Calu3 (cell line): ENCODE measurements at regions of chr2 and their contacts with region 1.

Region 1: GRCh38 chr2:23824777-23825212 is 102.1 kb downstream of the ATAD2B start:
- DNase-seq: peak; percentile 54
- H3K4me3 Mint-ChIP-seq: no peak overlapping the region
- H3K27ac Mint-ChIP-seq: no peak overlapping the region
- H3K4me1 Mint-ChIP-seq: no peaks in the 10 kb centered on the region
- H3K27me3 Mint-ChIP-seq: no peaks in the 10 kb centered on the region
- CTCF ChIP-seq: peak; percentile 30

Region 2: DNA sequence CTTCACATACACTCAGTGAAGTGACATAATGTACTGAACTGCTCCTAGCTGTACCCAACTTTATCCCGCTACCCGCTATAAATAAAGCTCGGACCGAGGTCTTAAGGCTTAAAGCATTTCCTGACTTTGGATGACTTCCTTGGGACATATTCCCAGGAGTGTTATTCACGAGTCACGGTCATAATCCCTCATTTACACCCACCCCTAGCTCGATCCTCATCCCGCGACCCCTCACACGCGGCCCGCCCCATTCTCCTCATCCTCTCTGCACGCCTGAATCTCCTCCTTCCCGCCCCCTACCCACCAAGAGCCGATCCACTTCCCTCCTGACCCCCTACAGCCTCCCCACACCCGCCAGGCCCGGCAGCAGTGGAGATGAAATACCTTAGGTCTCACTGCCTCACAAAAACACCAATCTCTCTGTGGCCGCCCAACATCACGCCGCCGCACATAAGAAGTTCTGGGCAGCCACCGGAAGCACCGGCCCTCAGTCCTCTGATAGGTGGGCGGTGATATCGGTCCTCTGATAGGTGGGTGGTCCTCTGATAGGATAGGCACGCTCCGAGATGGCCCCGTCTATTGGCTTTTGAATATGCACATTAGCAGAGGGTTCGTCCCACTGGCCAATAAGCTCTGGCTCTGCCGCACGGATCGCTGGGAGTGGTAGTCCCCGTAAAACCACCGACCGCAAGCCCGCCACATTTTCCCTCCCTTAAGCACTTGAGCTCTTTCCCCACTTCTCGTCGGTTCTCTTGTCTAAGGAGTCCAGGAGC is 222.3 kb after region 1 on chr2 and contains the start of gene WDCP:
- CTCF ChIA-PET with region 1: interaction called, 13 read pairs
- intact Hi-C with region 1: no loop called
- DNase-seq: peak; percentile 94
- H3K4me3 Mint-ChIP-seq: peak within 1 kb of the TSS; percentile 88
- H3K27ac Mint-ChIP-seq: peak within 1 kb of the TSS; percentile 50
- H3K4me1 Mint-ChIP-seq: peaks cover 9% of the 10 kb centered on the region
- H3K27me3 Mint-ChIP-seq: no peaks in the 10 kb centered on the region
- CTCF ChIP-seq: no peak
- total RNA-seq, gene WDCP: 13.4 and 17.2 TPM in 2 replicates

Region 3: DNA sequence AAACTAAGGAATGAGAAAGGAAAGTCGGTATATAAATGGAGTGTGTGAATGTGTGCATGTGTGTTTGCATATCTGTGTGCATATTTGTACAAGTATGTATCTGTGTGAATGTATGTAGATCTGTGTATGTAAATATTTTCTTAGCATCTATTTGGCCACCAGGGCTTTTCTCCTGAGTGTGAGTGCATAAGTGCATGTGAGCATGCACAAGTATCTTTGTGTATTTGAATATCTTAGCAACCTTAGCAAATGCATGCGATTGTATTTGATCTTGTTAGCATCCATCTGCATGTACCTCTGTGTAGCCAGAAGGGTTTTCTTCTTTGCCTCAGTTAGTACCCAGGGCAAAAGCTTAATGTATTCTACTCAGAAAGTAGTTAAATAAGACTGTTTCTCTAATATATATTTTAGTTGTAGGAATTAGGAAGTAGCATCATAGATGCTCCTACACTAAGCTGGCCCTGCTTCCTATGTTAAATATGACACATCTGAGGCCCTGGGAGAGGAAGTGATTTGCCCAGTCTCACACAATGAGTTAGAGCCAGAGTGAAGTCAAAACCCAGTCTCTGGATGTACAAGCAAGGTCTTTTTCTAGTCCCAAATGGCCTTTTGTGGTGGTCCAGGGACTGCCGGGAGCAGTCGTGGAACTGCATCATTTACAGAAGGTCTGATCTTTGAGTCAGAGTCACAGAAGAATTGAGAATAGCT is 233.9 kb after region 1 on chr2:
- CTCF ChIA-PET with region 1: interaction called, 4 read pairs
- intact Hi-C with region 1: loop called (anchors 2 kb)
- DNase-seq: no peak
- H3K4me3 Mint-ChIP-seq: no peak overlapping the region
- H3K27ac Mint-ChIP-seq: no peak overlapping the region
- H3K4me1 Mint-ChIP-seq: peaks cover 9% of the 10 kb centered on the region
- H3K27me3 Mint-ChIP-seq: no peaks in the 10 kb centered on the region
- CTCF ChIP-seq: no peak

Region 4: DNA sequence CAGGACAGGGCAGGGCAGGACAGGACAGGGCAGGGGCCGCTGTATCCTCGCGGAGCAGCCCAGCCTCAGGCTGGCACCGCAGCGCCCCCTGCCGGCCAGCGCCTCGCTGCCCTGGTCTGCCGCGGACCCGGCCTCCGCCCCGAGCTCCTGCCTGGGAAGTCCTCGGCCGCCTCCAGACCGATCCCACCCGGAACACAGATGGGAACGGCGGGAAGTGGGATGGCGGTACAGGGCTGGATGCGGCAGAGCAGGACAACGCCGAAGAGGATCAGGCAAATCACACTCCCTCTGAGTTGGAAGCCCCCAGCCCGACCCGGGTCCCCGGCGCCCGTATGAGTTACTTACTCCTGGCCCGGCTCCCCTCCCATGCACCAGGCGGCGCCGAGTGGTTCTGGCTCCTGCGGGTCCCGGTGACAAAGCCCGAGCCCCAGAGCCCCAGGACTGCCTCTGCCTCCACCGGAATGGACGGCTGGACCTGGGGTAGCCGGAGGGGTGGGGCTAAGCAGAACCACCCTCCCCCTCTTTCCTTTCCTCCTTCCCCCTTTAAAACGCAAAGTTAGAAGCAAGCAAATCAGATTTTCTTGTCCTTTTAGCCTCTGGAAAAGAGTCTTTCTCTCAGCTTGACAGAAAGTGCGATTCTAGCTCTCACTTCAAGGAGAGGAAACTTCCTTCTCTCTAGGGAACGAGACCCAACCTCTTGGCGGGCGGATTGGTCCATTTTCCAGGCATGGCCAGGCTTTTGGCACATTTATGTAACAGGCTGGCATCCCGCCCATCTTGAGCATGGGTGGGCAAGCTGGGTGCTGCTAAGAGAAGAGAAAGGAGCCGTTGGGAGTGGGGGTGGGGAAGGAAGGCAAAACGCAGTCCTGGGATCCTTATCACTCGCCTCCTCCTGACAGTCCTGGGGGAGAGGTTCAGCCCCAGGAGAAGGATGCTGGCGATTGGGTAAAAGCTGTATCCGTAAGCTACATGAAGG is 259.9 kb after region 1 on chr2 and contains the start of gene TP53I3:
- CTCF ChIA-PET with region 1: interaction called, 14 read pairs
- intact Hi-C with region 1: loop called (anchors 1 kb)
- DNase-seq: peak; percentile 97
- H3K4me3 Mint-ChIP-seq: peak within 1 kb of the TSS; percentile 86
- H3K27ac Mint-ChIP-seq: peak within 1 kb of the TSS; percentile 80
- H3K4me1 Mint-ChIP-seq: peaks cover 10% of the 10 kb centered on the region
- H3K27me3 Mint-ChIP-seq: no peaks in the 10 kb centered on the region
- CTCF ChIP-seq: peak; percentile 98
- total RNA-seq, gene TP53I3: 13.9 TPM in 2 replicates

Region 5: GRCh38 chr2:24164125-24164973 is 339.6 kb after region 1 on chr2:
- CTCF ChIA-PET with region 1: interaction called, 5 read pairs
- intact Hi-C with region 1: loop called (anchors 1 kb)
- DNase-seq: peak; percentile 65
- H3K4me3 Mint-ChIP-seq: no peak overlapping the region
- H3K27ac Mint-ChIP-seq: no peak overlapping the region
- H3K4me1 Mint-ChIP-seq: no peaks in the 10 kb centered on the region
- H3K27me3 Mint-ChIP-seq: peaks cover 16% of the 10 kb centered on the region
- CTCF ChIP-seq: peak; percentile 95